Activated CD4-positive, alpha-beta memory T cell treated with anti-CD3 and anti-CD28 coated beads for 36 hours (primary cell): ENCODE measurements at regions of chr2 and their contacts with region 1.

Region 1: GRCh38 chr2:225660262-225661131 is 261.0 kb downstream of the NYAP2 start:
- DNase-seq: peak; percentile 83
- H3K4me3 Mint-ChIP-seq: no peak overlapping the region
- H3K27ac Mint-ChIP-seq: no peak overlapping the region
- H3K4me1 Mint-ChIP-seq: no peaks in the 10 kb centered on the region
- H3K27me3 Mint-ChIP-seq: peaks cover 14% of the 10 kb centered on the region

Region 2: GRCh38 chr2:224802407-224802806 is 858.1 kb before region 1 on chr2:
- CTCF ChIA-PET with region 1: no interaction called
- POLR2A ChIA-PET with region 1: no interaction called
- intact Hi-C with region 1: no loop called
- DNase-seq: no peak
- H3K4me3 Mint-ChIP-seq: no peak overlapping the region
- H3K27ac Mint-ChIP-seq: peak overlapping the region; percentile 18
- H3K4me1 Mint-ChIP-seq: no peaks in the 10 kb centered on the region
- H3K27me3 Mint-ChIP-seq: no peaks in the 10 kb centered on the region

Region 3: GRCh38 chr2:225122583-225123486 is 537.7 kb before region 1 on chr2:
- CTCF ChIA-PET with region 1: interaction called, 22 read pairs
- POLR2A ChIA-PET with region 1: no interaction called
- intact Hi-C with region 1: loop called (anchors 1 kb)
- DNase-seq: peak; percentile 18
- H3K4me3 Mint-ChIP-seq: no peak overlapping the region
- H3K27ac Mint-ChIP-seq: no peak overlapping the region
- H3K4me1 Mint-ChIP-seq: no peaks in the 10 kb centered on the region
- H3K27me3 Mint-ChIP-seq: no peaks in the 10 kb centered on the region

Region 4: DNA sequence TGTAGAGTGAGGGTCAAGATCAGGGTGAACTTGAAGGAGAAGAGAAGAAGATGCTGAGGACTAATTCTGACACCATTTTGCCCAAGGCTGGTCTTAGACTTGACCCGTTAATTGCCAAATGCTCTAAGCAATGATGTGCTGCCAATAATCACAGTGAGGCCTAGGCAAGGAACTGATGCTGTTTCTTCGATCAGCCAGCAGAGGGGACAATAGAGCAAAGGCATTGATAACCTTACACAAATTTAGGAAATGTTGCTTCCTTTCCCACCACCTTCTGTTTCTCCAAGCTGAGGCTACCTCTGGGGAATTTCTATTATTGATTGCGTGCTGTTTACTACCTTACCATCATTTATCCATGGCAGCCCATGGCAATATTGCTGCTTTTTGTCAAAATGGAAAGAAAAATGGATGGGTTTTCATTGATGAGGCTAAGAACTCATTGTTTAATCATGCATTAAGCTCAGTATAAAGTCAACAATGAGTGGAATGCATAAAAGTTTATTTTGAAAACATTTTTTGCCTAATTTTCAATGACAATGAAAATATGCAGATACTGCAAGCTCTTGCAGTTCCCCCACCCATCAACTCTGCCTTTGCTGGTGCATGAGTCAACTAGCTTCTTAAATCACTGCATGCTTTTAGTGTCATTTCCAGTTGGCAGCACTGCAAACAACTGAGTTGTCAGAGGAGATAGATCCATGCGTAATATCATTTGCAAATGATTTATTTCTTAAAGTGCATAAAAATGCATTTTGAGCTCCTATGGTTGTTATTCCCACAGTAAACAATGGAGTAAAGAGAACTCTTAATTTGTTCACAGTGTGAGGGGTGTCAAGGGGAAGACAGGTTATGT is 377.4 kb before region 1 on chr2:
- CTCF ChIA-PET with region 1: interaction called, 89 read pairs
- POLR2A ChIA-PET with region 1: no interaction called
- intact Hi-C with region 1: loop called (anchors 1 kb)
- DNase-seq: peak; percentile 17
- H3K4me3 Mint-ChIP-seq: no peak overlapping the region
- H3K27ac Mint-ChIP-seq: no peak overlapping the region
- H3K4me1 Mint-ChIP-seq: no peaks in the 10 kb centered on the region
- H3K27me3 Mint-ChIP-seq: no peaks in the 10 kb centered on the region

Region 5: DNA sequence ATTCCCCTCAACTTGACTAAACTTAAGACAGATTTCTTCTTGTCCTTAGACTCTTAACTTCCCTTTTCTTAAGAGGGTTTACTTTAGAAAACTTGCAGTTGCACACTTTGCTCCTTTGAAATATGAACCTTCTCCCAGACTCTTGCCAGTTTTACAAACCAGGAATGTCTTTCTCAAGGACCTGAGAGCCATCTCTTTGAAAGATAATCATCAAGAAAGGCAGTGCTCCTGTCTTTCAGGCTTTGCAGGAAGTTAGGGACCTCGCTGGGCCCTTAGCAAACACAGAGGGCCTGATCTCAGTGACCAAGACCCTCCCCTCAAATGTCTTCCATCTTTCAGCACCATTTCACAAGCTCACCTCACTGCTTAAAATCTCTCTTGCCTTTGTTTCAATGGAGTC is 293.1 kb before region 1 on chr2:
- CTCF ChIA-PET with region 1: no interaction called
- POLR2A ChIA-PET with region 1: no interaction called
- intact Hi-C with region 1: no loop called
- DNase-seq: no peak
- H3K4me3 Mint-ChIP-seq: no peak overlapping the region
- H3K27ac Mint-ChIP-seq: no peak overlapping the region
- H3K4me1 Mint-ChIP-seq: no peaks in the 10 kb centered on the region
- H3K27me3 Mint-ChIP-seq: peaks cover 11% of the 10 kb centered on the region

Region 6: GRCh38 chr2:225650041-225650440 is 10.5 kb before region 1 on chr2:
- CTCF ChIA-PET with region 1: interaction called, 15 read pairs
- POLR2A ChIA-PET with region 1: interaction called, 3 read pairs
- intact Hi-C with region 1: no loop called
- DNase-seq: no peak
- H3K4me3 Mint-ChIP-seq: no peak overlapping the region
- H3K27ac Mint-ChIP-seq: no peak overlapping the region
- H3K4me1 Mint-ChIP-seq: no peaks in the 10 kb centered on the region
- H3K27me3 Mint-ChIP-seq: peaks cover 5% of the 10 kb centered on the region

Region 7: GRCh38 chr2:225806105-225806504 is 145.6 kb after region 1 on chr2:
- CTCF ChIA-PET with region 1: no interaction called
- POLR2A ChIA-PET with region 1: no interaction called
- intact Hi-C with region 1: no loop called
- DNase-seq: no peak
- H3K4me3 Mint-ChIP-seq: no peak overlapping the region
- H3K27ac Mint-ChIP-seq: no peak overlapping the region
- H3K4me1 Mint-ChIP-seq: no peaks in the 10 kb centered on the region
- H3K27me3 Mint-ChIP-seq: no peaks in the 10 kb centered on the region